IMR-90 (cell line): ENCODE measurements at regions of chr21 and their contacts with region 1.

Region 1: DNA sequence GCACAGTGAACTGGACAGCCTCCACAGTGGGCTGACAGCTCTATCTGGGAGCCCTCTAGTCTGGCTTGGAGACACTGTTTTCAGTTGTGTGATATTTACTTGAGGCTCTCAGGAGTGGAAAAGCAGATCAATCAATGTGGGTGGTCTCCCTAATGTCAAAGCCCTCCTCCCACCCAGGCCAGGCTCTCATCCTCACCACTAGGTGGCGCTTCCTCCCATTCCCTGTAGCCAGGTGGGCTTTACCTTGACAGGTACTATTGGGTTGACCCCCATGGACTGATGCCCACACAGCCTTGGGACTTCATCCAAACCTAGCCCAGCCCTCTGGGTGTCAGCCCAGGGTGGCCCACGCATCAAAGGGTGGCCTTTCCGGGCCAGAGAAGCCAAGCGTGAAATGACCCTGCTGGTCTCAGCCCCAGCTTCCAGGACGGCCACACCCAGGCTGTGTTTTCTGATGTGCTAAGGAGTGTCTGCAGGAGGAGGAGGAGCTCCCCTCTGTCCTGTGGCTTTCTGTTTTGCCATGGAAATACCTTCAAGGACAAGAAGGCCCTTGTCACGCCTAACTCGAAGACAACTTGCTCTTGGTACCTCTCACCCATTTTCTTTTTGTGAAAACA is 54.0 kb downstream of the CLIC6 start:
- DNase-seq: no peak
- ATAC-seq: no peak
- H3K4me3 ChIP-seq: no peak overlapping the region
- H3K27ac ChIP-seq: no peak overlapping the region
- H3K4me1 ChIP-seq: peaks cover 4% of the 10 kb centered on the region; the same call in 1 of the 2 replicates
- H3K27me3 ChIP-seq: peaks cover 28% of the 10 kb centered on the region
- CTCF ChIP-seq: peak; percentile 22; the same call in 1 of the 2 replicates
- POLR2A ChIP-seq: no peak
- RAD21 ChIP-seq: no peak

Region 2: GRCh38 chr21:33691945-33692603 is 1030.7 kb before region 1 on chr21:
- CTCF ChIA-PET with region 1: no interaction called
- POLR2A ChIA-PET with region 1: no interaction called
- dilution Hi-C with region 1: no loop called
- in situ Hi-C with region 1: no loop called
- intact Hi-C with region 1: no loop called
- DNase-seq: peak; percentile 15
- ATAC-seq: no peak
- H3K4me3 ChIP-seq: no peak overlapping the region
- H3K27ac ChIP-seq: no peak overlapping the region
- H3K4me1 ChIP-seq: peaks cover 6% of the 10 kb centered on the region
- H3K27me3 ChIP-seq: no peaks in the 10 kb centered on the region
- CTCF ChIP-seq: no peak
- POLR2A ChIP-seq: no peak
- RAD21 ChIP-seq: no peak

Region 3: GRCh38 chr21:34737107-34737506 is 14.3 kb after region 1 on chr21:
- CTCF ChIA-PET with region 1: no interaction called
- POLR2A ChIA-PET with region 1: no interaction called
- dilution Hi-C with region 1: no loop called
- in situ Hi-C with region 1: no loop called
- intact Hi-C with region 1: no loop called
- DNase-seq: no peak
- ATAC-seq: peak; percentile 49; the same call in 1 of the 2 replicates
- H3K4me3 ChIP-seq: no peak overlapping the region
- H3K27ac ChIP-seq: no peak overlapping the region
- H3K4me1 ChIP-seq: peaks cover 2% of the 10 kb centered on the region; the same call in 1 of the 2 replicates
- H3K27me3 ChIP-seq: peaks cover 8% of the 10 kb centered on the region
- CTCF ChIP-seq: no peak
- POLR2A ChIP-seq: no peak
- RAD21 ChIP-seq: no peak

Region 4: GRCh38 chr21:34783815-34784214 is 61.0 kb after region 1 on chr21:
- CTCF ChIA-PET with region 1: no interaction called
- POLR2A ChIA-PET with region 1: interaction called, 10 read pairs
- dilution Hi-C with region 1: no loop called
- in situ Hi-C with region 1: no loop called
- intact Hi-C with region 1: no loop called
- DNase-seq: no peak
- ATAC-seq: no peak
- H3K4me3 ChIP-seq: no peak overlapping the region
- H3K27ac ChIP-seq: no peak overlapping the region
- H3K4me1 ChIP-seq: peaks cover 2% of the 10 kb centered on the region; the same call in 1 of the 2 replicates
- H3K27me3 ChIP-seq: no peaks in the 10 kb centered on the region
- CTCF ChIP-seq: no peak
- POLR2A ChIP-seq: no peak
- RAD21 ChIP-seq: no peak